ENCODE measurements at regions of chr1 and their contacts with region 1.

Region 1: GRCh38 chr1:225474986-225475820 is 47.4 kb upstream of the LBR start:
- DNase-seq: peak; percentile 47 to 85 (median 80)
- ATAC-seq: peak; percentile 99
- H3K4me3 ChIP-seq: no peak overlapping the region
- H3K4me1 ChIP-seq: peaks cover 8% of the 10 kb centered on the region
- CTCF ChIP-seq: peak; percentile 100

Region 2: DNA sequence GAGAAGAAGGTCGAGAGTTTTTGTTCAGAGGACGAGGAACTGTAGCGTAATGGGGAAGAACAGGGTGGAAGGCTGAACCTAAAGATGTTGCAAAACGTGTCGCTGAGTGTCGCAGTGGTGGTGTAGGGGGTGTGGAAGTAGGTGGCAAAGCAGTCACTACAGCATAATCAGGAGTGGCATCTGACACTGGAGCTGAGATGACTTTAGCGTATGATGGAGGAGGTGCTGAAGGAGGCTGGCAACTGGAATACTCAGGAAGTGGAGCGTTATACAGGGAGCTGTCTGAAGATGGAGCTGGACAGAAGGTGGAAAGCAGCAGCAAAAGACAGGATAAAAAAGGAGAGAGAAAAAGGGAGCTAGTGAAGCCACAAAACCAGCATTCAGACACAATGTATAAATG is 42.5 kb after region 1 on chr1:
- intact Hi-C with region 1: no loop called
- DNase-seq: no peak
- ATAC-seq: no peak
- H3K4me3 ChIP-seq: no peak overlapping the region
- H3K4me1 ChIP-seq: peaks cover 6% of the 10 kb centered on the region
- CTCF ChIP-seq: no peak

Region 3: DNA sequence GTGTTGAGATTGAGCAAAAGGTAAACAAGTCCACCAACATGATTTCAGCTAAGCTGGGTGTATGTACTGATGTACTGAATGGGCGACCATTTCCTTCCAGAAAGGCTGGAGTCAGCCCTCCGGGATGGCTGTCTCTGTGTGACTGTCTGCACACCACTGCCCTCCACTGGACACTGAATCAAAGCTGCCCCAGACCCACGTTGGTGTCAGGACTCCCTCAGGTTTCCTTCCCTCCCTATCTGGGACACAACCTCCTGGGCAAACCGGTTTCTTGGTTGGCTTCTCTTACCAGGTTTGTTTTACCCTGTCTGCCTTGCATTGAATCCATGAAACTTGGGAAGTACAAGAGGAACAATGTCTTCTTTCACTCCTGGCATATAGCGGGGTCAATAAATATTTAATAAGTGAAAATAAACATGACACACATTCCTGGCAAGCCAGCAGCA is 297.1 kb after region 1 on chr1:
- intact Hi-C with region 1: loop called (anchors 5 kb)
- DNase-seq: peak; percentile 78 to 90 (median 84)
- ATAC-seq: peak; percentile 96
- H3K4me3 ChIP-seq: no peak overlapping the region
- H3K4me1 ChIP-seq: peaks cover 19% of the 10 kb centered on the region
- CTCF ChIP-seq: peak; percentile 50

Region 4: GRCh38 chr1:225911191-225912130 is 436.3 kb after region 1 on chr1:
- intact Hi-C with region 1: loop called in 1 of 2 experiments (anchors 10 kb)
- DNase-seq: peak; percentile 74 to 86 (median 80)
- ATAC-seq: peak; percentile 87
- H3K4me3 ChIP-seq: no peak overlapping the region
- H3K4me1 ChIP-seq: peaks cover 12% of the 10 kb centered on the region
- CTCF ChIP-seq: peak; percentile 87

Region 5: GRCh38 chr1:225977937-225978748 is 502.9 kb after region 1 on chr1:
- intact Hi-C with region 1: loop called (anchors 10 kb)
- DNase-seq: no peak
- ATAC-seq: no peak
- H3K4me3 ChIP-seq: no peak overlapping the region
- H3K4me1 ChIP-seq: peaks cover 13% of the 10 kb centered on the region
- CTCF ChIP-seq: no peak